ENCODE measurements at regions of chr6 and their contacts with region 1.

Region 1: DNA sequence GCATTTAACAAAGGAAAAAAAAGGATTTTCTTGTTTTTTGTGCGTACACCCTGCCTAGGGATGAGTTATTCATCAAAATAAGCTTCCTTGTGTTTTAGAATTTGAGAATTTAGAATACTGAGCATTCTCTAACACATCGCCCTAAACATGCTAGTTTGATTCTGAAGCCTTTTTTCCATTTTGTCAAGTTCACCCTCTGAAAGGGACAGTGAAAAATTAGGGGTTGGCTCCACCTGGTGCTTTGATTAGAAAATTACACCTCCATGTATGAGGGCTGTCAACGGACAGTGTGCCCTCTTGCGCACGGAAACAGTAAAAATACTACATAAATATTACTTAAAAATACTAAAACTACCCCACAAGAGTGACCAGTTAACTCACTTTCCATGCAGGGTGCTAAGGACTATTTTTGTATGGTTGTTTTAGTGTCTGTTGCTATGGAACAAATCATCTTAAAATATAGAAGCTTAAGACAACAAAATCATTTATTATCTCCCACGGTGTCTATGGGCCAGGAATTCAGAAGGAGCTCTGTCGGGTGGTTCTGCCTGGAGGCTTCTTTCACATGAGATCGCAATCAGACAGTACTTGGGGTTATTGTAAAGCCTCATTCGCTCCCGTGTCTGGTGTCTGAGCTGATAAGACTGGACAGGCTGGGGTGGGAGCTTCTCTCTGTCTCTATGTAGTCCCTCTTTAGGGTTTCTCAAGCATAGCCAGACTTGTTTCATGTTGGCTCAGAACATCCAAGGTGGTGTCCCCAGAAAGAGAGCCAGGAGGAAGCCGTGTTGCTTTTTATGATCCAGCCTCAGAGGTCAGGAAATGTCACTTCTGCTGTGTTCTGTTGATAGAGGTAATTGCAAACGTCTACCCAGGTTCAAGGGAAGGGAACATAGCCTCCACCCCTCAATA is 41.1 kb upstream of the TMEM170B start:
- DNase-seq: peak; percentile 87
- H3K4me3 Mint-ChIP-seq: no peak overlapping the region
- H3K27ac Mint-ChIP-seq: no peak overlapping the region
- H3K4me1 Mint-ChIP-seq: peaks cover 13% of the 10 kb centered on the region
- H3K27me3 Mint-ChIP-seq: no peaks in the 10 kb centered on the region

Region 2: DNA sequence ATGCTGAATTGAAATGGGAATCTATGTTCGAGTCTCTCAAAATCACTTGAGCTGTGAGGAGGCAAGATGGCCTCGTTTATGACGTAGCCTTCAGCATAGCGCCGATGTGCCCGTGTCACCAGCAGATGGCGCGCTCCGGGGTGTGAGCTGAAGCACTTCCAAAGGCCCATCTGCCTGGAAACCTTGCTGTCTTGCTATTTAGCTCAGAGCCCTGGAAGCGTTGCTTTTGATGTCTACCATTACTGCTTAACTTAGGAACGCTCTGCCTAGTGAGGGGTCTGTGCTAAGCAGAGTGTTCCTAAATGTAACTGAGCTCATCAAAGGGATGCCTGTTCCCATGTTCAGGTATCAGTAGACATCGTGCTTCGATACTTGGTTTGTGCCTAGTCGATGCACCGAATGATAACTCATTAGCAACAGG is 541.8 kb before region 1 on chr6:
- CTCF ChIA-PET with region 1: interaction called, 10 read pairs
- intact Hi-C with region 1: loop called (anchors 1 kb)
- DNase-seq: peak; percentile 84
- H3K4me3 Mint-ChIP-seq: no peak overlapping the region
- H3K27ac Mint-ChIP-seq: no peak overlapping the region
- H3K4me1 Mint-ChIP-seq: no peaks in the 10 kb centered on the region
- H3K27me3 Mint-ChIP-seq: peaks cover 16% of the 10 kb centered on the region

Region 3: GRCh38 chr6:11144393-11144851 is 352.0 kb before region 1 on chr6:
- CTCF ChIA-PET with region 1: interaction called, 77 read pairs
- intact Hi-C with region 1: loop called (anchors 1 kb)
- DNase-seq: peak; percentile 89
- H3K4me3 Mint-ChIP-seq: no peak overlapping the region
- H3K27ac Mint-ChIP-seq: no peak overlapping the region
- H3K4me1 Mint-ChIP-seq: peaks cover 7% of the 10 kb centered on the region
- H3K27me3 Mint-ChIP-seq: no peaks in the 10 kb centered on the region

Region 4: GRCh38 chr6:11179419-11180202 is 316.8 kb before region 1 on chr6:
- CTCF ChIA-PET with region 1: interaction called, 16 read pairs
- intact Hi-C with region 1: no loop called
- DNase-seq: no peak
- H3K4me3 Mint-ChIP-seq: no peak overlapping the region
- H3K27ac Mint-ChIP-seq: no peak overlapping the region
- H3K4me1 Mint-ChIP-seq: no peaks in the 10 kb centered on the region
- H3K27me3 Mint-ChIP-seq: no peaks in the 10 kb centered on the region

Region 5: GRCh38 chr6:11277275-11278206 is 218.9 kb before region 1 on chr6:
- CTCF ChIA-PET with region 1: interaction called, 9 read pairs
- intact Hi-C with region 1: loop called (anchors 1 kb)
- DNase-seq: peak; percentile 48
- H3K4me3 Mint-ChIP-seq: peak overlapping the region; percentile 3
- H3K27ac Mint-ChIP-seq: peak overlapping the region; percentile 74
- H3K4me1 Mint-ChIP-seq: peaks cover 42% of the 10 kb centered on the region
- H3K27me3 Mint-ChIP-seq: no peaks in the 10 kb centered on the region

Region 6: GRCh38 chr6:11414176-11414963 is 82.0 kb before region 1 on chr6:
- CTCF ChIA-PET with region 1: interaction called, 7 read pairs
- intact Hi-C with region 1: loop called (anchors 2 kb)
- DNase-seq: peak; percentile 60
- H3K4me3 Mint-ChIP-seq: no peak overlapping the region
- H3K27ac Mint-ChIP-seq: no peak overlapping the region
- H3K4me1 Mint-ChIP-seq: peaks cover 33% of the 10 kb centered on the region
- H3K27me3 Mint-ChIP-seq: no peaks in the 10 kb centered on the region